GM13976 (cell line): ENCODE measurements at regions of chr4 and their contacts with region 1.

Region 1: GRCh38 chr4:158161551-158162354 is 11.1 kb downstream of the GASK1B start:
- DNase-seq: no peak
- CTCF ChIP-seq: no peak

Region 2: DNA sequence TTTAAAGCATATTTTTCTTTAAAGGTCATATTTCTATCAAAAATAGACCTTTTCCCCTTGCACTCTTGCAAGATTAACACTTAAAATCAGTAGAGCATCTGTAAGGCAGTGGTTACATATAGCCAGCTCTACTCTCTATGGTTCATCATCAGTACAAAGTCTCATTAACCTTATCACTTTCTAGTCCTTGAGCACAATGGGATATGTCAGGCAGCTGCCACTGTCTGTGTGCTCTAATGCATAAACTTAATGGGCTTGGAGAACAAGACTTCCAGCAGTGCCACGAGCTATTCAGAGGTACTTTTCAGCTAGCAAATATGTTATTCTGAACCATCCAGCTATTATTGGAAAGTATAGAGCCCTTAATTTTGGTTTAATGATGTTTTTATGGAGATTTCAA is 382.7 kb before region 1 on chr4:
- in situ Hi-C with region 1: no loop called
- DNase-seq: no peak
- CTCF ChIP-seq: no peak

Region 3: GRCh38 chr4:157992038-157992705 is 169.6 kb before region 1 on chr4:
- in situ Hi-C with region 1: loop called (anchors 10 kb)
- DNase-seq: peak; percentile 13
- CTCF ChIP-seq: peak; percentile 46